Calu3 (cell line): ENCODE measurements at regions of chr10 and their contacts with region 1.

Region 1: GRCh38 chr10:61903221-61903927 is 1.9 kb downstream of the ARID5B start:
- DNase-seq: peak; percentile 72
- H3K4me3 Mint-ChIP-seq: peak overlapping the region; percentile 79
- H3K27ac Mint-ChIP-seq: peak overlapping the region; percentile 77
- H3K4me1 Mint-ChIP-seq: peaks cover 29% of the 10 kb centered on the region
- H3K27me3 Mint-ChIP-seq: no peaks in the 10 kb centered on the region
- CTCF ChIP-seq: peak; percentile 60

Region 2: DNA sequence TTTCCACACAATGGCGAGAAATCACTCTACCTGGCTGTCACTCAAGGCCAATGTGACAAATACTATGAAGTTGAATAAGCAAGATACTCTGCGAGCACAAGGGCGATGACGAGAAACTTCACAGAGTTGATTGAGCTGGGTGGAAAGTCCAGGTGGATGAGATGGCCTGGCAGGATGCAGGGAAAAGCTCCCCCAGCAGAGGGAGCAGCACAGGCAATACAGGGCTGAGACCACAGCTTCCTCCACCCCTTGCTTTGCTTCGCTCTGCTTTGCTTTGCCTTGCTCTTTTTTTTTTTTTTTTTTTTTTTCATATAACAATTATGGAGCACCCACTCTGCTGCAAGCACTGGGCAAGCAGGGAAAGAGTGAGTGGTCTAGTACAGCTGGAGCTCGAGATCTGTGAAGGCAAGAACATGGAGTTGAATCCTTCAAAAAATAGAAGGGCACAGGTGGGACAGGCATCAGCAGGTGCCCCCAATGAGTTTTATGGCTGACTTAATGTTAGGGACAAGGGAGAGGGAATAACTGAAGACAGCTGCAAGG is 152.4 kb before region 1 on chr10:
- CTCF ChIA-PET with region 1: interaction called, 12 read pairs
- intact Hi-C with region 1: loop called (anchors 2 kb)
- DNase-seq: peak; percentile 90
- H3K4me3 Mint-ChIP-seq: peak overlapping the region; percentile 58
- H3K27ac Mint-ChIP-seq: peak overlapping the region; percentile 96
- H3K4me1 Mint-ChIP-seq: peaks cover 54% of the 10 kb centered on the region
- H3K27me3 Mint-ChIP-seq: no peaks in the 10 kb centered on the region
- CTCF ChIP-seq: peak; percentile 85

Region 3: DNA sequence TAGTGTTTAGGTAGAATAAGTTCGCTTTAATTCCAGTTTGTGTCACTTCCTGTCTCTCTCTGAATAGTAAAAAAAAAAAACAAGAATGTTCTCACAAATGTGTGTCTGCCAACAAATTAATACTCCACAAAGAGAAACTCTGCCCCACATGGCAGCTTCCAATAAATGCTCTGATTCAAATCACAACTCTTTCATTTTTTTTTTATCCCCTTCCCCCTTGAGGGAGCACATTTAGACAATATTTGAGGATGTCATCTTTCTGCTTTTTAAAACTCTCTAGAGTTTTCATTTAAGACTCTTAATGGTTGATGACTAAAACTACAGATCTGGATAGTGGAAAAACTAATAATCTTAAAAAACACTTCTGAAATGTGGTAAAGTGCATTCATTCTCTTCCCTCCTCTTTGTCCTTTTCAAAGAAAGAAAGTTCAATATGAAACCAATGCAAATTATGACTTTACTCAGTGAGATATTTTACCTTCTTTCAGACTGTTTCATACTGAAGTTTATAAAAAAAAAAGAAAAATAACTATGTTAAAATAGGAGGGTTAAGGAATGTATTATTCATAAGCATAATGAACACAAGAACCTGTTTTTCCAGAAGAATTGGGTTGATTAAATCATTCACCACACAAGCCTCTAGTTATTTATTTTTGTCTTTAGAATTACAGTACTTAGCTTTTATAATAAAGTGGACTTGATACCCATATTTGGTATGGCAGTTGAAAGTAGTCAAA is 40.5 kb after region 1 on chr10:
- CTCF ChIA-PET with region 1: interaction called, 8 read pairs
- intact Hi-C with region 1: loop called (anchors 1 kb)
- DNase-seq: peak; percentile 23
- H3K4me3 Mint-ChIP-seq: peak overlapping the region; percentile 50
- H3K27ac Mint-ChIP-seq: peak overlapping the region; percentile 94
- H3K4me1 Mint-ChIP-seq: peaks cover 51% of the 10 kb centered on the region
- H3K27me3 Mint-ChIP-seq: no peaks in the 10 kb centered on the region
- CTCF ChIP-seq: no peak

Region 4: DNA sequence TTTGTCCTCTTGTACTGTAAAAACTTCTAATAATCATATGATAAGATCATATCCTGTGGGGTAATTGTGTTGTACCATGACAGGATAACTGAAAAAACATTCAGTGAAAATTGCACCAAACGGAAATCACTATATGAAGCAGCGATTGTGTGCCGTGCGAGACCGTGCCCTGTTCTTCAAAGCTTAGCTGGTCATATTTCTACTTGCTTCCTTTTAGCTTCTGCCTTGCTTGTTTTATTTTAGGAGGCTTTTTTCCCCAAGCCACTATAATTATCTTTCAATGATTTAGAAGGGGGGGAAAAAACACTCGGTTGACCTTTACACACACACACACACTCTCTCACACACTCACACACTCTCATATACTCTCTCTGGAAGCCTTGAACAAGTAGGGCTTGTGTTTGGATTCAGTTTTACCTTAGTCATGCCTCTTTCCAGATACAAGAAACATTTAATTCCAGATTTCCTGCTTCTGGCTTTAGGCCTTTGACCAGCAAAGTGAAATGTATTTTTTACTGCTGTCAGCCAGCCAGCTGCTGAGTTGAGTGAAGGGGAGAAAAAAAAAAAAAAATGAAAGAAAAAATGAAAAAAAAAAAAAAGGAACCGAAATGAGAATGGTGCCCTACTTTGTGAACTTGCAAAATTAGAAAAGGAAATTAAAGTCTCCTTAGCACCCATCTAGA is 179.5 kb after region 1 on chr10:
- CTCF ChIA-PET with region 1: no interaction called
- intact Hi-C with region 1: loop called (anchors 2 kb)
- DNase-seq: peak; percentile 21
- H3K4me3 Mint-ChIP-seq: peak overlapping the region; percentile 27
- H3K27ac Mint-ChIP-seq: peak overlapping the region; percentile 89
- H3K4me1 Mint-ChIP-seq: peaks cover 47% of the 10 kb centered on the region
- H3K27me3 Mint-ChIP-seq: no peaks in the 10 kb centered on the region
- CTCF ChIP-seq: no peak

Region 5: GRCh38 chr10:62095181-62096071 is 192.1 kb after region 1 on chr10:
- CTCF ChIA-PET with region 1: interaction called, 8 read pairs
- intact Hi-C with region 1: loop called (anchors 5 kb)
- DNase-seq: peak; percentile 54
- H3K4me3 Mint-ChIP-seq: peak overlapping the region; percentile 67
- H3K27ac Mint-ChIP-seq: peak overlapping the region; percentile 100
- H3K4me1 Mint-ChIP-seq: peaks cover 64% of the 10 kb centered on the region
- H3K27me3 Mint-ChIP-seq: no peaks in the 10 kb centered on the region
- CTCF ChIP-seq: no peak

Region 6: DNA sequence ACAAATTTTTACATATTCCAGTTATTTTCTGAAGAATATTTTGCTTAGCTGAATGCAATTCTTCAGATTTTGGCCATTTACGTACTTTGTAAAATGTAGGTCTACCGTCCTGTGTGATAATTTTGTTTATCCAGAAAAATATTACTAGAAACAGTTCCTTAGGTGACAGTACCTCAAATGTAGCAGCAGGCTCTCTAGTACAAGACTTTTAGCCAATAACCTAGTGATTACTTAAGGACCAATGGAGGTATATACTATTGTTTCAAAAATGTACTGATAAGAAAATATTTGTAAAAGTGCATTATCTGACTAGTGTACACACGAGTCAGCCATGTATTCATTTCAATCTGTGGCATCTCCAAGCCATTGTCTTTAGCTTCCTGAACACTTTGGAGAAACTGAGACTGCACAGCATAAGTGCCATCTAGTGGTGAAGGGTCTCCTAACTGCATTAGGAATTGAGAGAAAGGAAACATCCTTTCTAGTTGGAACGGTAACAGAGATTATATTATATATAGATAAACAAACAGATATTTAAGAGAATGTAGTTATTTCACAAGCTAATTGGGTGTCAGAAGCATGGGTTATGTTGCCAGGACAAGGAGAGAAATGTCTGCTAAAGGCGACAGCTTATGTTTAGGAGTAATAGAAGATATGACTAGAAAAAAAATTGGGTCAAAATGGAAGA is 341.6 kb after region 1 on chr10:
- CTCF ChIA-PET with region 1: interaction called, 7 read pairs
- intact Hi-C with region 1: loop called (anchors 1 kb)
- DNase-seq: peak; percentile 51
- H3K4me3 Mint-ChIP-seq: no peak overlapping the region
- H3K27ac Mint-ChIP-seq: peak overlapping the region; percentile 9
- H3K4me1 Mint-ChIP-seq: peaks cover 19% of the 10 kb centered on the region
- H3K27me3 Mint-ChIP-seq: no peaks in the 10 kb centered on the region
- CTCF ChIP-seq: peak; percentile 77

Region 7: DNA sequence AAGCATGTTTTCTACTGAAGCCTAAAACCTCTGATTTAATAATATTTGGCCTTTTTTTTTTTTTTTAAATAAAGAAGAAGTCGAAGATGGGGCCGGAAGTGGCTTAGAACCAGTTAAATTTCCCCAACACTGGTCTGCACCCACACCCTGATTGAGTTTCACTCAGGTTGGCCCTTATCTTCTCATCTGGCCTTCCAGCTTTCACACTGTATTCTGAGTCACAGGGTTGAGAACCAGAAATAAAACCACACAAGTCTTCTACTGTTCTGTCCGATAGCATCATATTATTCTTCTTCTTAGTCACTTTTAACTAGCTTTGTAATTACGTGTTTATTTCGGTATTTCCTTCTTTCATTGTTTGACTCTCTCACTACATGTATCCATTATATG is 480.7 kb after region 1 on chr10:
- CTCF ChIA-PET with region 1: no interaction called
- intact Hi-C with region 1: loop called (anchors 5 kb)
- DNase-seq: peak; percentile 73
- H3K4me3 Mint-ChIP-seq: peak overlapping the region; percentile 27
- H3K27ac Mint-ChIP-seq: peak overlapping the region; percentile 96
- H3K4me1 Mint-ChIP-seq: peaks cover 65% of the 10 kb centered on the region
- H3K27me3 Mint-ChIP-seq: no peaks in the 10 kb centered on the region
- CTCF ChIP-seq: no peak